Caco-2 (cell line): ENCODE measurements at regions of chr5 and their contacts with region 1.

Region 1: GRCh38 chr5:121691478-121691877 is 160.2 kb upstream of the FTMT start:
- DNase-seq: peak; percentile 67 to 72
- H3K4me3 ChIP-seq: no peak overlapping the region
- H3K4me3 Mint-ChIP-seq: peak overlapping the region; percentile 3
- H3K27ac Mint-ChIP-seq: peak overlapping the region; percentile 75
- H3K4me1 ChIP-seq: peaks cover 48% of the 10 kb centered on the region
- H3K4me1 Mint-ChIP-seq: peaks cover 14% of the 10 kb centered on the region
- H3K27me3 ChIP-seq: no peaks in the 10 kb centered on the region
- H3K27me3 Mint-ChIP-seq: no peaks in the 10 kb centered on the region
- CTCF ChIP-seq: no peak

Region 2: DNA sequence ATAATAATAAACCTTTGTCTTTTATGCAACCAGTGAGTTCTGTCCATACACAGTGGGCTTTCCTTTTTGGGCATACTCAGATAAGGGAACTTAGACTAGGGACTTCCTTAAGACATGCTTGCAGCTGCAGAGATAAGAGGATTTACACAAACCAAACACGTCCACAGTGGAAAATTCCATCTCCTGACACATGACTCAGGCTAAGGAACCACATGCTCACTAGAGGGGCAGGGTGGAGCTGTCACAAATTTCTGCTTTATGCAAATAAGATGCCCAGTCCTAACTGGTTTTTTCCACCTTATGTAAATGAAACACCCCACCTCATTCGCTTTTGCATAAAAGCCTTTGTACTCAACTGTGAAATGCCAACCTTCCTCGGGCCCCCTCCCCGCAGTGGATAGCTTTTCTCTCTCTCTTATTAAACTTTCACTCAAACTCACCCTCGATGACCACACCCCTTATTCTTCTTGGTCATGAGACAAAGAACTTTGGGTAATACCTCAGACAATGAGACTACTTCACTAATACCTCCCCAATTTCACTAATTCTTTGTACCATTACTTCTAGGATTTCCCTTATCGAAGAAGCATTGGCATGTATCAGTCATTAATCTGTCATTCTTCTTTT is 10.1 kb before region 1 on chr5:
- CTCF ChIA-PET with region 1: no interaction called
- POLR2A ChIA-PET with region 1: no interaction called
- intact Hi-C with region 1: loop called (anchors 1 kb)
- DNase-seq: peak; percentile 59 to 60
- H3K4me3 ChIP-seq: no peak overlapping the region
- H3K4me3 Mint-ChIP-seq: no peak overlapping the region
- H3K27ac Mint-ChIP-seq: peak overlapping the region; percentile 7
- H3K4me1 ChIP-seq: no peaks in the 10 kb centered on the region; the same call in 1 of the 2 replicates
- H3K4me1 Mint-ChIP-seq: no peaks in the 10 kb centered on the region
- H3K27me3 ChIP-seq: no peaks in the 10 kb centered on the region
- H3K27me3 Mint-ChIP-seq: no peaks in the 10 kb centered on the region
- CTCF ChIP-seq: no peak

Region 3: GRCh38 chr5:121706686-121707085 is 15.2 kb after region 1 on chr5:
- CTCF ChIA-PET with region 1: no interaction called
- POLR2A ChIA-PET with region 1: no interaction called
- intact Hi-C with region 1: no loop called
- DNase-seq: no peak
- H3K4me3 ChIP-seq: no peak overlapping the region
- H3K4me3 Mint-ChIP-seq: no peak overlapping the region
- H3K27ac Mint-ChIP-seq: no peak overlapping the region
- H3K4me1 ChIP-seq: no peaks in the 10 kb centered on the region
- H3K4me1 Mint-ChIP-seq: no peaks in the 10 kb centered on the region
- H3K27me3 ChIP-seq: no peaks in the 10 kb centered on the region
- H3K27me3 Mint-ChIP-seq: no peaks in the 10 kb centered on the region
- CTCF ChIP-seq: no peak

Region 4: DNA sequence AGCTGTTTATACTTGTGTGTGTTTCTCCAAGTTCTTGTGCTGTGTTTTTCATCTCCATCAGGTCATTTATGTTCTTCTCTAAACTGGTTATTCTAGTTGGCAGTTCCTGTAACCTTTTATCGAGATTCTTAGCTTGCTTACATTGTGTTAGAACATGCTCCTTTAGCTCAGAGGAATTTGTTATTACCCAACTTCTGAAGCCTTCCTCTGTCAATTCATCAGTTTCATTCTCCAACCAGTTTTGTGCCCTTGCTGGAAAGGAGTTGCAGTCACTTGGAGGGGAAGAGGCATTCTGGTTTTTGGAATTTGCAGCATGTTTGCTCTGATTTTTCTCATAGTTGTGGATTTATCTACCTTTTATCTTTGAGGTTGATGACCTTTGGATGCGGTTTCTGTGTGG is 34.0 kb after region 1 on chr5:
- CTCF ChIA-PET with region 1: no interaction called
- POLR2A ChIA-PET with region 1: no interaction called
- intact Hi-C with region 1: loop called (anchors 1 kb)
- DNase-seq: peak in 1 of 2 experiments; percentile 49
- H3K4me3 ChIP-seq: no peak overlapping the region
- H3K4me3 Mint-ChIP-seq: peak overlapping the region; percentile 3
- H3K27ac Mint-ChIP-seq: peak overlapping the region; percentile 78
- H3K4me1 ChIP-seq: peaks cover 17% of the 10 kb centered on the region
- H3K4me1 Mint-ChIP-seq: peaks cover 15% of the 10 kb centered on the region
- H3K27me3 ChIP-seq: no peaks in the 10 kb centered on the region
- H3K27me3 Mint-ChIP-seq: no peaks in the 10 kb centered on the region
- CTCF ChIP-seq: no peak

Region 5: DNA sequence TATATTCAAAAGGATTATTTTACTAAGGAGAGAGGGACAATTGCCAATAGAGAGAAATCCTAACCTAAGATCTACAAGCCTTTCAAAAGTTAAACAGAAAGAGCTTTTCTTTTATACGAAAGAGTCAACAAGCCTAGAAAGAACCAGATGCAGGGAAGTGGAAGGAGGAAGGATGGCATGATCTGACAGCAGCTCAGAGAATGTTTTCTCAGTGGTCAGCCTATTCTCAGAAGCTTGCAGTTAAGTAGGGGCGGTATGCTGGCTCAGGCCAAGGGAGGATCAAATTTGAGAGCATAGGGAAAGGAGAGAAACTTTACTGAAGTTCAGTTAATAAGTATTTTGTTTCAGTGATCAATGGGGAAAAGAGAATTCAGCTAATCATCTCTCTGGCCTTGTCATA is 72.2 kb after region 1 on chr5:
- CTCF ChIA-PET with region 1: no interaction called
- POLR2A ChIA-PET with region 1: no interaction called
- intact Hi-C with region 1: loop called (anchors 1 kb)
- DNase-seq: no peak
- H3K4me3 ChIP-seq: no peak overlapping the region
- H3K4me3 Mint-ChIP-seq: no peak overlapping the region
- H3K27ac Mint-ChIP-seq: no peak overlapping the region
- H3K4me1 ChIP-seq: peaks cover 20% of the 10 kb centered on the region
- H3K4me1 Mint-ChIP-seq: peaks cover 7% of the 10 kb centered on the region
- H3K27me3 ChIP-seq: no peaks in the 10 kb centered on the region
- H3K27me3 Mint-ChIP-seq: no peaks in the 10 kb centered on the region
- CTCF ChIP-seq: no peak

Region 6: DNA sequence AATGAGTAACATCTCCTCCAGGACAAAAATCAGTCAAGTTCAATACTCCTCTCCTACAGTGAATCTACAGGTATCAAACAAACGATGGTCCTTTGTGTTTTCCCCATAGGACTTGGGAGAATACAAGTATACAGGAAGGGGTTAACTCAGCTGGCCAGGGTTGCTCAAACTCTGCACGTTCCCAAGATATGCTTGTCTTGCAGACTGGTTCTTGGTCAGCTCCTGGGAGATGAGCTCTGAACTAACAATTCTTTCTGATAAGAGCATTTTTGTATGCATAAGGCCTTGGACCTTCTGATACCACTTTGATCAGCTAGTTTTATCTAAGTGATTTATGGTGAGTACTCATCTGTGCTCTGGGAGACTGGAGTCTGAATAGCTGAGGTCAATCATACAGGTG is 344.4 kb after region 1 on chr5:
- CTCF ChIA-PET with region 1: no interaction called
- POLR2A ChIA-PET with region 1: no interaction called
- intact Hi-C with region 1: loop called (anchors 1 kb)
- DNase-seq: peak; percentile 82 to 92
- H3K4me3 ChIP-seq: no peak overlapping the region
- H3K4me3 Mint-ChIP-seq: peak overlapping the region; percentile 50
- H3K27ac Mint-ChIP-seq: peak overlapping the region; percentile 31
- H3K4me1 ChIP-seq: peaks cover 63% of the 10 kb centered on the region
- H3K4me1 Mint-ChIP-seq: peaks cover 76% of the 10 kb centered on the region
- H3K27me3 ChIP-seq: no peaks in the 10 kb centered on the region
- H3K27me3 Mint-ChIP-seq: no peaks in the 10 kb centered on the region
- CTCF ChIP-seq: no peak

Region 7: GRCh38 chr5:122864400-122864799 is 1172.9 kb after region 1 on chr5:
- CTCF ChIA-PET with region 1: no interaction called
- POLR2A ChIA-PET with region 1: no interaction called
- intact Hi-C with region 1: no loop called
- DNase-seq: no peak
- H3K4me3 ChIP-seq: no peak overlapping the region
- H3K4me3 Mint-ChIP-seq: no peak overlapping the region
- H3K27ac Mint-ChIP-seq: no peak overlapping the region
- H3K4me1 ChIP-seq: peaks cover 22% of the 10 kb centered on the region
- H3K4me1 Mint-ChIP-seq: peaks cover 22% of the 10 kb centered on the region
- H3K27me3 ChIP-seq: no peaks in the 10 kb centered on the region
- H3K27me3 Mint-ChIP-seq: no peaks in the 10 kb centered on the region
- CTCF ChIP-seq: no peak